Activated T-helper 1 cell treated with anti-CD3 and anti-CD28 coated beads, Interleukin-12 subunit alpha, Interleukin-12 subunit beta, Interleukin-2, Interleukin-4 antibody, amounts not matched to agents 30 ng/mL and 10 ng/mL and 1 ng/mL, durations not matched to agents 14 hours and 24 hours and 36 hours (primary cell): ENCODE measurements at regions of chr11 and their contacts with region 1.

Region 1: DNA sequence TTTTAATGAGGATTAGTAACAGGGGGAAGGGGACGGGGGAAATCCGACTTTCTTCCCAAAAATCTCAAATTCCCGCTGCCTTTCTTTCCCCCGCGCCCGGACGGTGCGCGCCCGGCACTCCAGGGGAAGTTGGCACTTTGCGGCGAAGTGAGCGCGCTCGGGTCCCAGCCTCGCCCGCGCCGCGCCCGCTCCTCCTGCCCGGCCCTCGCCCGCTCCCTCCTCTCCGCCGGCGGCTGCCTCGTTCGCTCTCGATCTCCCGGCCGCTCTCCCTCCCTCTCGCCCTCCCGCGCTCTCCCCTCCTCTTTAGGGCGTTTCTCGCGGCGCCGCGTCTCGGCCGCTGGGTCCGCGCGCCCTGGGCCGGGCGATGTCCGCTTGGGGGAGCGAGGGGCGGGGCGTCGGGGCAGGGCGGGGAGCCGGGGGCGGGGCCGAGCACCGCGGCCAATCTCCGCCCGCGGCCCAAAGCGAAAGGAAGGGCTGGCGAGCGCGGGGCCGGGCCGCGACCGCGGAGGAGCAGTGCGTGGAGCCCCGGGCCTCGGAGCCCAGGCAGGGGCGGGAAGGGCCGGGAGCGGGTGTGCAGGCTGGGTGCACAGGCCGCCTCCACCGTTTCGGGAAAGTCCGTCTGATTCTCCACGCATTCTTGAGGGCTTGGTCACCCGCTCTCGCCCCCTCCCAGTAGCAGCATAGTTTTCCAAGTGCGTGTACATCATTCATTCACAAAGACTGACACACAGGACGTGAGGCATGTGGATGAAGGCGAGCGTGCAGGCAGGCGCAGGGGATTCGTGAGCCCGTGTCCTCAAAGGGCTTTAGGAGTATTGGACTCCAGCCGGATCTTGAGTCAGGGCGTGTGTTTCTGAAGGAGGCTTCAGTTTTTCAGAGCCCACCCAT is 65.1 kb downstream of the ETS1 start:
- DNase-seq: peak; percentile 91
- H3K4me3 Mint-ChIP-seq: peak overlapping the region; percentile 96
- H3K27ac Mint-ChIP-seq: peak overlapping the region; percentile 98
- H3K4me1 Mint-ChIP-seq: peaks cover 65% of the 10 kb centered on the region
- H3K27me3 Mint-ChIP-seq: no peaks in the 10 kb centered on the region

Region 2: GRCh38 chr11:128232588-128232987 is 289.7 kb before region 1 on chr11:
- intact Hi-C with region 1: loop called (anchors 1 kb)
- DNase-seq: no peak
- H3K4me3 Mint-ChIP-seq: peak overlapping the region; percentile 58
- H3K27ac Mint-ChIP-seq: peak overlapping the region; percentile 85
- H3K4me1 Mint-ChIP-seq: peaks cover 58% of the 10 kb centered on the region
- H3K27me3 Mint-ChIP-seq: peaks cover 2% of the 10 kb centered on the region

Region 3: GRCh38 chr11:128437137-128437536 is 85.2 kb before region 1 on chr11:
- intact Hi-C with region 1: no loop called
- DNase-seq: no peak
- H3K4me3 Mint-ChIP-seq: no peak overlapping the region
- H3K27ac Mint-ChIP-seq: no peak overlapping the region
- H3K4me1 Mint-ChIP-seq: peaks cover 24% of the 10 kb centered on the region
- H3K27me3 Mint-ChIP-seq: no peaks in the 10 kb centered on the region

Region 4: DNA sequence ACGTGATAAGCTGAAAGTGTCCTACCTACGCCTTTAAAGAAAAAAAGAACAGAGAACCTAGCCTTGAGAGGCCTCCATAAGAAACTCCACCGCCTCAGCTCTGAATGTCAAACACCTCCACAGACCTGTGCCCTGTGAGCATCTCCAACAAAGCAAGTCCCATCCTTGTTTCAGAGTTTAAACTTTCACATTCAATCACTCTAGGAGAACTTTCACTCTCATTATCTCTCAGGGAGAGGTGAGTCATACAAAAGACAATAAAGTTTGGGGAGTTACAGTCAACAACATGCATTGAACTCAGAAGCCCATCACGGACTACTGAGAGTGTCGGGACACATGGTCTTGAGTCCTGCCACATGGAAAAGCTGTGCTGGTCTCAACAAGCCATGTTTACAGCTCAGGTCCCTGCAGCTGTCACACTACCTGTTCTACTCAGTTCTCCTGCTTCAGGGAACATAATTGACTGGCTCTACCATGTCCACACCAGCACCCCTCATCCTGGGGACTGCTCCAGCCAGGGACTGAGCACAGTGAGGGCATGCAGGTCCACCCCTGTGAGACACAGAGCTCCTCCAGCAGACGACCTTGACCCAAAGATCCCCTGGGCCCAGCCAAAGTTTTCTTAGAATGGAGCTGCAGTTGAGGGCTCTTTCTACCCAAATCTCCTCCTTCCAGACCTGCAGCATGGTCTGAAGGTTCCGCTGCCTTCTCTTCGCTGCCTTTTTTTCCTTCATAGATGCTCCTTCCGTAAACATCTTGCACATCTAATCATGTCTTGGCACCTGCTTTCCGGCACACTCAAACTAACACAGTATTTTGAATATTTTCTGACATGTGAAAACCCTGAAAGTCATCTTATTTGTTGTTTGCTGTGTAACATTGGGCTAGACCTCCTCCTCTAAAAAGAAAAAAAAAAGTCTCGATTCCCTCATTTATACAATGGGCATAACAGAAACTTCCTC is 49.9 kb before region 1 on chr11:
- intact Hi-C with region 1: loop called (anchors 1 kb)
- DNase-seq: peak; percentile 61
- H3K4me3 Mint-ChIP-seq: peak overlapping the region; percentile 80
- H3K27ac Mint-ChIP-seq: peak overlapping the region; percentile 95
- H3K4me1 Mint-ChIP-seq: peaks cover 94% of the 10 kb centered on the region
- H3K27me3 Mint-ChIP-seq: no peaks in the 10 kb centered on the region

Region 5: DNA sequence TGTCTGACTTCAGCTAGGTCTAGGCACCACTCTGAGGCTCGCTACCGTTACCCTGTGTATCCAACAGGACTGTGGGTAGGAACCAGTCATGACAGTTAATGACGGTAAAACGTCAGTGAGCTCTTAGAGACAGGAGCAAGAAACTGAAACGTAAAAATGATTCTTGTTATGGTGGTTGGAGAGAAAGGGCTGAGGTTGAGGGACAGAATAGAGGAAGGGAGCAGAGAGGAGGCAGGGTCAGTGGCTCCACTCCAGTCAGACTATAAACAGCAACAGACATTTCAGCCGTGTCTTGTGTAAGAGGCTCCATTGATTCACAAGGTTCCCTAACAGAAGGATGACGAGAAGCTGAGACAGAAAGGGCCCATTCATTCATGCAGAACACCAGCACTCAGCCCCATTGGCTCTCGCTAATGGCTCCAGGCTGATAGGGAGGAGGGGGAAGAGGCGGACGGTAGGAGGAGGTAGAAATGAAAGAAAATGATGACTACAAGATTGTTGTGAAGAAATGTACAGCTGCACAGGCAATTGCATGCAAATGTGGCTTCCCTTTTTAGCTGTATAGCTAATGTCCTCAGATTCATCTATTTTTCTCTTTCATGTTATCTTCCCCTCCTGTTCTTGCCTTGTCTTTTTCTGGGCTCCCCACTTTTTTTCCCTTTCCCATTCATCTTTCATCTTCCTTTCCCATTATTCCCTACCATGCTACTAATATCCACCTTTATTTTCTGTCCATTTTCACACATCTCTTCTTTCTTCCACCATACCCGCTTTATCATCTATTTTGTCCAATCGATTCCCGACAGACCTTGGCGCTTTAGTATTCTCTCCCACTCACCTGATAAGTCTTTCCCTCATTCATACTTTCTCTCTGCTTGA is 30.7 kb after region 1 on chr11:
- intact Hi-C with region 1: loop called (anchors 1 kb)
- DNase-seq: no peak
- H3K4me3 Mint-ChIP-seq: peak overlapping the region; percentile 0
- H3K27ac Mint-ChIP-seq: peak overlapping the region; percentile 53
- H3K4me1 Mint-ChIP-seq: peaks cover 60% of the 10 kb centered on the region
- H3K27me3 Mint-ChIP-seq: no peaks in the 10 kb centered on the region

Region 6: DNA sequence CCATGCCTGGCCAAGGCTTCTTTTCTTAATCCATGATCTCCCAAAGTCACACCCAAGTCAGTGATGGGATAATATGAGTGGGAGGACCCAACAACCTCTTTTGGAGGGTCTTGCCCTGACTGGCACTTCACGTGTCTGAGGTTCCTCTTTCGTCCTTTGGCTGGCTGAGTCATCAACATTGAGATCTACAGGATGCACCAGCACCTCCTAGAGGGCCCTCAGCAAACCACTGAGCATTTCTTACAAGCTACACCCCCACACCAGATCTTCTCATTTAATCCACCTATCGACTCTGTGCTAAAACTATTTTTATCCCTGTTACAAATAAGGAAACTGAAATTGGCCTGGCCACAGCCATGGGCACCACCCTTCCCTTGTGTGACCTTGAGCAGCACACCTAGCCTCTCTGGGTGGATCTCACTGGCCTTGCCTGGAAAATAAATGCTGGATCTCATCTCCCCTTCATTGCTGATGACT is 235.0 kb after region 1 on chr11:
- intact Hi-C with region 1: loop called (anchors 1 kb)
- DNase-seq: peak; percentile 55
- H3K4me3 Mint-ChIP-seq: peak overlapping the region; percentile 63
- H3K27ac Mint-ChIP-seq: peak overlapping the region; percentile 95
- H3K4me1 Mint-ChIP-seq: peaks cover 68% of the 10 kb centered on the region
- H3K27me3 Mint-ChIP-seq: no peaks in the 10 kb centered on the region